ENCODE measurements at regions of chr5 and their contacts with region 1.

Region 1: DNA sequence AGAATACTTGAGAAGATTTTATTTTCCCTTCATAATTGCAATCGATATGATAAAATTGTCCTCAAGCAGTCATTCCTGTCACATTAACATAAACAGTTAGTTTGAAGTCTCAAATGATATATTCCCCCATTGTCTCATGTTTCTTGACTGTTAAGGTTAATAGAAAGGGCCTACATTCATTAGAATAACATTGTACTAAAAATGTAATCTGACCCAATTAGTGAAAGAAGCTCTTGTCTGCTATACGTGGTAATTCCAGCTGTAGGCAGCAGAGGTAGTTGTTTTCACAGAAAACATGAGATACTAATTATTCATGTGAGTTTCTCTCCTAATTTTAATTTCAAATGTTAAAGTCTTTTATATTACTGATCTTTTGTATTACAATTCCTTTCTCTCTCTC is 25.9 kb upstream of the AP3B1 start:
- DNase-seq: peak; percentile 22
- H3K4me3 Mint-ChIP-seq: no peak overlapping the region
- H3K27ac Mint-ChIP-seq: no peak overlapping the region
- H3K4me1 Mint-ChIP-seq: no peaks in the 10 kb centered on the region
- H3K27me3 Mint-ChIP-seq: no peaks in the 10 kb centered on the region

Region 2: GRCh38 chr5:78345485-78345884 is 25.1 kb after region 1 on chr5:
- CTCF ChIA-PET with region 1: no interaction called
- intact Hi-C with region 1: no loop called
- DNase-seq: no peak
- H3K4me3 Mint-ChIP-seq: no peak overlapping the region
- H3K27ac Mint-ChIP-seq: no peak overlapping the region
- H3K4me1 Mint-ChIP-seq: no peaks in the 10 kb centered on the region
- H3K27me3 Mint-ChIP-seq: peaks cover 4% of the 10 kb centered on the region

Region 3: DNA sequence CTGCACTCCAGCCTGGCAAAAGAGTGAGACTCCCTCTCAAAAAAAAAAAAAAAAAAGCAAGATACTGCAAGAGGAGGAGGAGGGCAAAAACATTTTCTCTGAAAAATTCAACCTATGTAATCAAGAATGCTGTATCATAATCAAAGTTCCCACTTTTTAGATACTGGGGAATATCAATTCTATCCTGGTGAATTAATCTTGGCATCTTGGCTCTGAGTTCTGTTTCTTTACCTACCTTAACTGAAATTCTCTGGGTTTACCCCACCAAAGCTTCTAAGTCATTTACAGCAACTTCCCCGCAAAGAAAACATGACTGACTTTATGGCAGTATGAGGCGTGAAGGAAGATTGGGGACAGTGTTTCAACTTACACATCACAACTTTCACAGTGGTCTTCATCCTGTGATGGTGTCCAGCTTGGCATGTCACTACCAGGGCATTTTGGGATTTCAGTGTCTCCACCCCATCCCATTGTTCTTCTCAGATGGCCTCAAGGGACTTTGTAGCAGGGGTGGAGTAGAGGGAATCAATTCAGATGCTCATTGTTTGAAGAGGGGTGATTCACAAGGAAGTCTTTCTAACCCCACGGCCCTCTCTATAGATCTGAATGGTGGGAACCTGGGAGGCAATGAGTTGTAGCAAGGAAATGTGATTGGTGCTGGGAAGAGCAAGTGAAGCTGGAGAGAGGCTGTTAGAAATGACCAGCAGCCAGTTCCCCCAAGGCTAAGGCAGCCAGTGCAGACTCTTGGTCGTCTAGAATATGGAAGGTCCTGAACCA is 170.5 kb after region 1 on chr5:
- CTCF ChIA-PET with region 1: interaction called, 3 read pairs
- intact Hi-C with region 1: loop called (anchors 2 kb)
- DNase-seq: no peak
- H3K4me3 Mint-ChIP-seq: no peak overlapping the region
- H3K27ac Mint-ChIP-seq: no peak overlapping the region
- H3K4me1 Mint-ChIP-seq: no peaks in the 10 kb centered on the region
- H3K27me3 Mint-ChIP-seq: no peaks in the 10 kb centered on the region

Region 4: DNA sequence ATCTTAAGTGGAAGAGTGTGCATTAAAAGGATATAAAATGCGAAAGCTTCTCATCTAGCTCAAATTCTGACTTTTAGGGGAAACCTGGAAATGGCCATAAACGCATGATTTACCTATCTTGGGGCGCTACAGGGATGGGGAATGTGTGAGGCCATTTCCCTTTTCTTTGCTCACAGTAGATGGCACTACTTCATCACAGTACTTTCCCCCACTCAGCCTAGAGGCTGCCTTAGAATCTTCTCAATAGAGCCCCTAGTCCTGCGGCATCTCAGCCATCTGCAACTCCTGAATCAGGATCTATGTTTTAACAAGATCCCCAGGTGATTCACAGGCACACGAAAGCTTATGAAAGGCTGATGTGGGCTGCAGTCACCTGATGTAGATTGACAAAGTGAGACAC is 217.4 kb after region 1 on chr5:
- CTCF ChIA-PET with region 1: interaction called, 3 read pairs
- intact Hi-C with region 1: loop called (anchors 5 kb)
- DNase-seq: no peak
- H3K4me3 Mint-ChIP-seq: no peak overlapping the region
- H3K27ac Mint-ChIP-seq: no peak overlapping the region
- H3K4me1 Mint-ChIP-seq: no peaks in the 10 kb centered on the region
- H3K27me3 Mint-ChIP-seq: no peaks in the 10 kb centered on the region

Region 5: GRCh38 chr5:78886341-78887230 is 566.2 kb after region 1 on chr5:
- CTCF ChIA-PET with region 1: no interaction called
- intact Hi-C with region 1: loop called (anchors 5 kb)
- DNase-seq: no peak
- H3K4me3 Mint-ChIP-seq: no peak overlapping the region
- H3K27ac Mint-ChIP-seq: no peak overlapping the region
- H3K4me1 Mint-ChIP-seq: peaks cover 13% of the 10 kb centered on the region
- H3K27me3 Mint-ChIP-seq: no peaks in the 10 kb centered on the region

Region 6: DNA sequence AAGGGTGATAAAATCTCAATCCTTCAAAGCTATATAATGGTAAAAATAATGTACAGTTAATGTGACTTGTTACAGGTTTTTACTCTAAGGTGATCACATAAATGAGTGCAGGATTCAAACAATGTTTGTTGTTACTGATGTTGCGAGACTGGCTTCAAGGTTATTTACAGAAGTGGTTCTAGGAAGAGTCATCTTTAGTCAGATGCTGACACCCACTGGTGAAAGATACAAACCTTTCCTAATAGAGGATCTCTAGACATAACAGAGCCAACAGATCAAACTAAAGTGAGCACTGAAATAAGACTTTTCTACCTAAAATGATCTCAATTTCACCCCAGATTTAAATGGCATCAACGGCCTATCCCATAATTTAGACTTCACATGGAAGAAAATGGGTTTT is 644.5 kb after region 1 on chr5:
- CTCF ChIA-PET with region 1: no interaction called
- intact Hi-C with region 1: loop called (anchors 2 kb)
- DNase-seq: no peak
- H3K4me3 Mint-ChIP-seq: no peak overlapping the region
- H3K27ac Mint-ChIP-seq: no peak overlapping the region
- H3K4me1 Mint-ChIP-seq: no peaks in the 10 kb centered on the region
- H3K27me3 Mint-ChIP-seq: no peaks in the 10 kb centered on the region